ENCODE measurements at regions of chr1 and their contacts with region 1.

Region 1: DNA sequence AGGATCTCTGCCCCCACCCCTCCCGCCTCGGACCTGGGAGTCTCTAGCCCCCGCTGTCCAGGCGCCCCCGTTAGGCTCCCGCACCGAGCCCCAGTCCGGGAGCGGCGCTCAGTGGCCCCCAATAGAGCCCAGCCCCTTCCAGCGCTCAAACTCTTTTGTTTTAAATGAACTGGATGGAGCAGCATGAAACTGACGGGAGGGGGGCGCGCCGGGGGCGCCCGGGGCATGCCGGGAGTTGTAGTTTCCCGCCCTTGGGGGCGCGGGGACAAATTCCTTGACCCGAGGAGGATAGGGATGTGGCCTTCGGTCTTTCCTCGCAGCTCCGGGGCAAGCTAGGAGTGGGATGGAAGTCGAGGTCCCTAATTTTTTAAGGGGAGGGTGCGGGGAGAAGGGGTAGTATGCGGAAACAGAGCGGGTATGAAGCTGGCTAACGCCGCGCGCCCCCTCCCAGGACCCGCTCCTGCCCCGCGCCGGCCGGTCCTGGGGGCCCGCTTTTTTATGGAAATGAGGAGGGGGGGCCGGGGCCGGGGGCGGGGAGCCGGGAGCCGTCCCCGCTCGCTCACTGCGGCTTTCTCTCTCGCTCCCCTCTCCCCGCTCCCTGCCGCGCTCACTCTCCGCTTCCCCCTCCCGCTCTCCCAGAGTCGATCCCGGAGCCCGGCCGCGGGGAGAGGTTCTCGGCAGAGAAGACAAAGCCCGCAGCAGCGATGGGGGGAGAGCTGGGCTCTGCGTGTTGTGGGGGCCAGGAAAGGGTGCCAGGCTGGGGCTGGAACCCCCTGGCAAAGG is at the start of gene MEX3A:
- DNase-seq: peak; percentile 87
- H3K4me3 ChIP-seq: peak within 1 kb of the TSS; percentile 88 to 97 (median 91)
- H3K27ac ChIP-seq: peak within 1 kb of the TSS; percentile 52
- H3K4me1 ChIP-seq: peaks cover 30% of the 10 kb centered on the region
- H3K27me3 ChIP-seq: no peaks in the 10 kb centered on the region
- CTCF ChIP-seq: no peak
- POLR2A ChIP-seq: peak; percentile 67
- total RNA-seq, gene MEX3A: 23.6 and 26.6 TPM in 2 replicates

Region 2: DNA sequence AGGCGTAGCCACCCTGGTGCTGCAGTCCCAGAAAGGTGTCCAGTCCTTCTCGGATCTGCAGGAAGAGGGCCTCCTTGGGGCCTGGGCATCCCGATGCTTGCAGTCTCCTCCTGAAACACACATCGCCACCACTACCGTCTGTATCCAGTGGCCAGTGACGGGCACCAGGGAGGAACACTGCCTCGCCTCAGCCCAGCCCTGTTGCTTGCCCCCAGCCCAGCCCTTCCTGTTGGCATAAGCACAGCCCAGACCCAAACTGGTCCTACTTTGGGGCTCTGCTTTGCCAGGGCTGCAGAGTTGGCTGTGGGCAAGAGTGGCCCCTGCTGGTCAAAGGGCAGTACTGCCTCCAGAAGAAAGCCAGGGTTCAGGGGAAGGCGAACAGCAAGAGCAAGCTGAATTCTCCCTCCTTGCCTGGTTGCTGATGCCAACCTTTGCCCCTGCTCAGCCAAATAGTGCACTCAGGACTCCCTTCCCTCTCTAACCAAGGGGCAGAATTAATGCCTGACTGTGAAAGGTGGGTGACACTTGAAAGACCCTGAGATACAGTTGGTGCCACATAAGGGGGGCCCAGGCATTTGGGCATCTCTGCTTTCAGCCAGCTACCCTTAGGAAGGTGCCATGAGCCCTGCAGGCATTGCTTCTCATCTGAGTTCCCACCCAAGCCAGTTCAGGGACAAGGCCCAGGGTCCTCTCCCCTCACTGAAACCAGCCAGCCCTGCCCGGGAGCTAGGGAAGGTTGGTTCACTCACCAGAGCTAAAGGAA is 93.1 kb before region 1 on chr1:
- CTCF ChIA-PET with region 1: no interaction called
- POLR2A ChIA-PET with region 1: no interaction called
- dilution Hi-C with region 1: no loop called
- intact Hi-C with region 1: no loop called
- DNase-seq: peak; percentile 76
- H3K4me3 ChIP-seq: no peak overlapping the region
- H3K27ac ChIP-seq: no peak overlapping the region
- H3K4me1 ChIP-seq: peaks cover 6% of the 10 kb centered on the region
- H3K27me3 ChIP-seq: no peaks in the 10 kb centered on the region
- CTCF ChIP-seq: peak; percentile 95 to 98
- POLR2A ChIP-seq: no peak

Region 3: GRCh38 chr1:156338180-156338973 is 255.9 kb after region 1 on chr1 and contains the starts of genes CCT3 and TSACC:
- CTCF ChIA-PET with region 1: no interaction called
- POLR2A ChIA-PET with region 1: no interaction called
- dilution Hi-C with region 1: no loop called
- intact Hi-C with region 1: loop called (anchors 10 kb)
- DNase-seq: peak; percentile 100
- H3K4me3 ChIP-seq: peak within 1 kb of the TSS; percentile 57 to 92 (median 57)
- H3K27ac ChIP-seq: peak within 1 kb of the TSS; percentile 9
- H3K4me1 ChIP-seq: peaks cover 15% of the 10 kb centered on the region
- H3K27me3 ChIP-seq: peaks cover 2 to 3% of the 10 kb centered on the region in 2 experiments
- CTCF ChIP-seq: no peak
- POLR2A ChIP-seq: peak; percentile 93
- total RNA-seq, gene CCT3: 330 and 367 TPM in 2 replicates
- total RNA-seq, gene TSACC: 0.69 TPM in 1 of 2 replicates, not detected in the other

Region 4: GRCh38 chr1:156540791-156541383 is 458.4 kb after region 1 on chr1:
- CTCF ChIA-PET with region 1: no interaction called
- POLR2A ChIA-PET with region 1: no interaction called
- dilution Hi-C with region 1: no loop called
- intact Hi-C with region 1: no loop called
- DNase-seq: no peak
- H3K4me3 ChIP-seq: no peak overlapping the region
- H3K27ac ChIP-seq: no peak overlapping the region
- H3K4me1 ChIP-seq: no peaks in the 10 kb centered on the region
- H3K27me3 ChIP-seq: no peaks in the 10 kb centered on the region
- CTCF ChIP-seq: no peak
- POLR2A ChIP-seq: no peak